ENCODE measurements at regions of chr12 and their contacts with region 1.

Region 1: GRCh38 chr12:7638760-7639555 is 26.8 kb downstream of the APOBEC1 start:
- DNase-seq: peak; percentile 68
- H3K4me3 Mint-ChIP-seq: peak overlapping the region; percentile 68
- H3K27ac Mint-ChIP-seq: peak overlapping the region; percentile 13
- H3K4me1 Mint-ChIP-seq: peaks cover 20% of the 10 kb centered on the region
- H3K27me3 Mint-ChIP-seq: peaks cover 12% of the 10 kb centered on the region

Region 2: DNA sequence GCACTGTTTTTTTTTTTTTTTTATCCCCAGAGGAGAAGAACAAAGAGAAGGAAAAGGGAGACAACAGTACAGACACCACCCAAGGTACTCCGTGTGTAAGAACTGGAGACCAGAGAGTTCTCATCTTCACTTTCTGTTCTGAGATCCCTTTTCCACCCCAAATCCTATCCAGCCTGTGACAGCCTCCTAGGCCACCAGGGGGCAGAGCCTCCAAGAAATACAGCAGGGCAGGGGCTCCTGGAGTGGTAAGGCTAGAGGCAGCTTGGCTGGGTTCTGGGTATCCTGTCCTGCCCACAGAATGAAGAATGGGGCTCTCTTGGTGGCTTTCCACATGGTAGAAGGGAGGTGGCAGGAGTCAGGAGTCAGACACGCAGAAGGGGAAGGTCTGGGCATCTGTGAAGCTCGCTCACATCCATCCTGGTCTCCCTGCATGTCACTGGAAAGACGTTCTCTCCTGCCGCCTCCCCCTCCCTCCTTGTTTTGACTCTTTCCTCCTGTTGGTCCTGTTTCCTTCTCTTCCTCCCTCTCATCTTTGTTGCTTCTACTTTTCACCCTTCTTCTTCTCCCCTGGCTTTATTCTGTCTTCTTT is 496.8 kb before region 1 on chr12:
- intact Hi-C with region 1: loop called (anchors 2 kb)
- DNase-seq: peak; percentile 38
- H3K4me3 Mint-ChIP-seq: no peak overlapping the region
- H3K27ac Mint-ChIP-seq: no peak overlapping the region
- H3K4me1 Mint-ChIP-seq: peaks cover 5% of the 10 kb centered on the region
- H3K27me3 Mint-ChIP-seq: no peaks in the 10 kb centered on the region

Region 3: GRCh38 chr12:7219599-7220243 is 419.2 kb before region 1 on chr12:
- intact Hi-C with region 1: loop called (anchors 1 kb)
- DNase-seq: peak; percentile 49
- H3K4me3 Mint-ChIP-seq: no peak overlapping the region
- H3K27ac Mint-ChIP-seq: no peak overlapping the region
- H3K4me1 Mint-ChIP-seq: no peaks in the 10 kb centered on the region
- H3K27me3 Mint-ChIP-seq: peaks cover 3% of the 10 kb centered on the region

Region 4: DNA sequence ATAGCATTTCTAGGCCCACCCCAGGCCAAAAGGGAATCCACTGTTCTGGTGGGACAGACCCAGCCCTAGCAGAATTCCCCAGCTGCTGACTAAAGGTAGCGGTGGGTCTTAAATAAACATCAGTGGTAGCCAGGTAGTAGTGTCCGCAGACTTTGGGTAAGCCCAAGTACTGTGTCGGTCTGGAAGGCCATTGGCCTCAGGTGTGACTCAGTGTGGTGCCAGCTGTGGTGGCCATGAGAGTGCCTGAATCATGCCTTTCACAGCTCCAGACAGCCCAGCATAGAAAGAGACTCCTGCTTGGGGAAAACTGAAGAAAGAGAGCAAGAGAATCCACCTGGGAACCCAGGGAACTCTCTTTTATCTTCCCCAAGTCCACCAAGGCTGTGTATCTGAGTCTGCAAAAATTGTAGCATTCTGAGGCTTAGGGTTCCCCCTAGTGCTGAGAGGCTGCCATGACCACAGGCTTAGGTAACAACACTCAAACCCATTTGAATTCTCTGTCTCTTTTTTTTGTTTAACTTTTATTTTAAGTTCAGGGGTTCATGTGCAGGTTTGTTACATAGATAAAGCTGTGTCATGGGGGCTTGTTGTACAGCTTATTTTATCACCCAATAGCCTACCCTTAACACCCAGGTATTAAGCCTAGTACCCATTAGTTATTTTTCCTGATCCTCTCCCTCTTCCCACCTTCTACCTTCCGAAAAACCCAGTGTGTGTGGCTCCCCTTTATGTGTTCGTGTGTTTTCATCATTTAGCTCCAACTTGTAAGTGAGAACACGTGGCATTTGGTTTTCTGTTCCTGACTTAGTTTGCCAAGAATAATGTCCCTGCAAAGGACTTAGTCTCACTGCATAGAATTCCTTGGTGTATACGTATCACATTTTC is 178.3 kb before region 1 on chr12:
- intact Hi-C with region 1: loop called (anchors 10 kb)
- DNase-seq: peak; percentile 31
- H3K4me3 Mint-ChIP-seq: no peak overlapping the region
- H3K27ac Mint-ChIP-seq: no peak overlapping the region
- H3K4me1 Mint-ChIP-seq: no peaks in the 10 kb centered on the region
- H3K27me3 Mint-ChIP-seq: peaks cover 2% of the 10 kb centered on the region

Region 5: GRCh38 chr12:7583571-7583970 is 55.4 kb before region 1 on chr12:
- intact Hi-C with region 1: loop called (anchors 1 kb)
- DNase-seq: no peak
- H3K4me3 Mint-ChIP-seq: no peak overlapping the region
- H3K27ac Mint-ChIP-seq: no peak overlapping the region
- H3K4me1 Mint-ChIP-seq: peaks cover 2% of the 10 kb centered on the region
- H3K27me3 Mint-ChIP-seq: peaks cover 27% of the 10 kb centered on the region

Region 6: DNA sequence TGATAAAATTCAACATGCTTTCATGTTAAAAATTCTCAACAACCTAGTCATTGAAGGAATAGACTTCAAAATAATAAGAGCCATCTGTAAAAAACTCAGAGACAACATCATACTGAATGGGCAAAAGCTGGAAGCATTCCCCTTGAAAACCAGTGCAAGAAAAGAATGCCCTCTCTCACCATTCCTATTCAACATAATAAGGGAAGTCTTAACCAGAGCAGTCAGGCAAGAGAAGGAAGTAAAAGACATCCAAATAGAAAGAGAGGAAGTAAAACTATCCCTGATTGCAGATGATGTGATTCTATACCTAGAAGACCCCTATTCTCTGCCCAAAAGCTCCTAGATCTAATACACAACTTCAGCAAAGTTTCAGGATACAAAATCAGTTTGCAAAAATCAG is 26.1 kb before region 1 on chr12:
- intact Hi-C with region 1: no loop called
- DNase-seq: no peak
- H3K4me3 Mint-ChIP-seq: no peak overlapping the region
- H3K27ac Mint-ChIP-seq: no peak overlapping the region
- H3K4me1 Mint-ChIP-seq: peaks cover 12% of the 10 kb centered on the region
- H3K27me3 Mint-ChIP-seq: peaks cover 15% of the 10 kb centered on the region